IMR-90 (cell line): ENCODE measurements at regions of chr4 and their contacts with region 1.

Region 1: DNA sequence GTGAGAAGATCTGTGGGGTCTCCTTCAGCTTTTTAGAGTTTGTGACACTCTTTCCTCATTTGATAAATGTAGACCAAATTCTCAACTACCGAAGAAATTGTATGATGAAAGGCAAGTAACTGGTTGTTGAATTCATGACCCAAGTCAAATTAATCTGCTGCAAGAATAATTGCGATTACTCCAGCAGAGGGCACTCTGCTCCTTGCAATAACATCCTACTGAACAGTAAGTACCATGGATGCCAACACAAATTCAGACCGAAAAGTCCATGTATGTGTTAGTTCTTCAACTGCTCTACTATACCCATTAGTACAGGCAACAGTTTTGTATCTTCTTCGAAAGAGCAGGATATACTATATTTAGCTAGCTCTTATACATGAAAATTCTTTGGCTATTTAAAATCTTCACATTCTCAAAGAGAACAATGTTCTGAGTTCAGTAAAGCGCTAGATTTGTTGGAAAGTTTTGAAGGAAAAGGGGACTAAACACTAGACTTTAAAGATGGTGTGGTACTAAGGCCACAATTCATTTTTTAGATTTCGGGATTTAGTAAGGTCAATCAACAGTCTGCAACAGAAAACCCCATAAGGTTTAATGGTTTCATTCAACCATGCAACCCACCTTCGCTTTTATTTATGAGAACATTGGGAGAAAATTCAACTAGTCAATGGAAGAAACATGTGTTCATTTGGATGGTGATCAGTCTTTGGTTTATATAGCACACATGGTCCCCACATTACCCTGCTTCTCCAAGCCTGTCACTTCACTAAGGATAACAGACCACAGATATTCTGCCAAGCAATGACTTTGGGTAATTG is 105.4 kb upstream of the TBC1D9 start:
- DNase-seq: peak; percentile 91
- ATAC-seq: peak; percentile 79
- H3K4me3 ChIP-seq: no peak overlapping the region
- H3K27ac ChIP-seq: no peak overlapping the region
- H3K4me1 ChIP-seq: peaks cover 2% of the 10 kb centered on the region; the same call in 1 of the 2 replicates
- H3K27me3 ChIP-seq: no peaks in the 10 kb centered on the region
- CTCF ChIP-seq: peak; percentile 92
- POLR2A ChIP-seq: peak; percentile 44; the same call in 1 of the 2 replicates
- RAD21 ChIP-seq: peak; percentile 99

Region 2: GRCh38 chr4:140012688-140013486 is 848.7 kb before region 1 on chr4:
- CTCF ChIA-PET with region 1: no interaction called
- POLR2A ChIA-PET with region 1: no interaction called
- dilution Hi-C with region 1: no loop called
- in situ Hi-C with region 1: loop called (anchors 25 kb)
- intact Hi-C with region 1: no loop called
- DNase-seq: peak; percentile 95
- ATAC-seq: peak; percentile 98
- H3K4me3 ChIP-seq: no peak overlapping the region
- H3K27ac ChIP-seq: no peak overlapping the region
- H3K4me1 ChIP-seq: peaks cover 4% of the 10 kb centered on the region
- H3K27me3 ChIP-seq: no peaks in the 10 kb centered on the region
- CTCF ChIP-seq: peak; percentile 91
- POLR2A ChIP-seq: no peak
- RAD21 ChIP-seq: peak; percentile 95

Region 3: GRCh38 chr4:140884431-140885058 is 23.0 kb after region 1 on chr4:
- CTCF ChIA-PET with region 1: interaction called, 3 read pairs
- POLR2A ChIA-PET with region 1: no interaction called
- dilution Hi-C with region 1: no loop called
- in situ Hi-C with region 1: no loop called
- intact Hi-C with region 1: loop called (anchors 1 kb)
- DNase-seq: peak; percentile 80
- ATAC-seq: peak; percentile 95
- H3K4me3 ChIP-seq: no peak overlapping the region
- H3K27ac ChIP-seq: no peak overlapping the region
- H3K4me1 ChIP-seq: no peaks in the 10 kb centered on the region
- H3K27me3 ChIP-seq: no peaks in the 10 kb centered on the region
- CTCF ChIP-seq: peak; percentile 68
- POLR2A ChIP-seq: no peak
- RAD21 ChIP-seq: peak; percentile 72

Region 4: DNA sequence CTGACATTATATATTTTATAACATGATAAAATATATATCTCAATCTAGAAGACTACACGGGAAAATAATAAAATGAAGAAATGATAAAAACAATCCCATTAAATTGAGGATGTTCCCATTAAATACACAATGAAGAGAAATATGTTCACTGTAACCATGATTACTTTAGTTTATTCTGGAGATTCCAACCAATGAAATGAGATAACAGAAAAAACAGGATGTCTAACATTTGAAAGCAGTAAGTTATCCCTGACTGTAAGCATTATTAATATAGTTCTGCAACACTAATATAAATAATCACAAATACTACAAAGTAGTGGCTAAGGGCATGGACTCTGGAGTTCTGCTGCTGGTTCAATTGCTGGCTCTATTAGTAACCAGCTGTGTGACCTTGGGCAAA is 102.3 kb after region 1 on chr4:
- CTCF ChIA-PET with region 1: no interaction called
- POLR2A ChIA-PET with region 1: no interaction called
- dilution Hi-C with region 1: no loop called
- in situ Hi-C with region 1: no loop called
- intact Hi-C with region 1: loop called (anchors 5 kb)
- DNase-seq: no peak
- ATAC-seq: no peak
- H3K4me3 ChIP-seq: no peak overlapping the region
- H3K27ac ChIP-seq: no peak overlapping the region
- H3K4me1 ChIP-seq: no peaks in the 10 kb centered on the region
- H3K27me3 ChIP-seq: no peaks in the 10 kb centered on the region
- CTCF ChIP-seq: no peak
- POLR2A ChIP-seq: no peak
- RAD21 ChIP-seq: no peak

Region 5: GRCh38 chr4:140996766-140997165 is 135.2 kb after region 1 on chr4:
- CTCF ChIA-PET with region 1: no interaction called
- POLR2A ChIA-PET with region 1: no interaction called
- dilution Hi-C with region 1: no loop called
- in situ Hi-C with region 1: loop called (anchors 10 kb)
- intact Hi-C with region 1: loop called (anchors 2 kb)
- DNase-seq: peak; percentile 78
- ATAC-seq: peak; percentile 86
- H3K4me3 ChIP-seq: no peak overlapping the region
- H3K27ac ChIP-seq: no peak overlapping the region
- H3K4me1 ChIP-seq: peaks cover 2% of the 10 kb centered on the region; the same call in 1 of the 2 replicates
- H3K27me3 ChIP-seq: no peaks in the 10 kb centered on the region
- CTCF ChIP-seq: peak; percentile 48
- POLR2A ChIP-seq: no peak
- RAD21 ChIP-seq: peak; percentile 48

Region 6: GRCh38 chr4:141046255-141046654 is 184.7 kb after region 1 on chr4:
- CTCF ChIA-PET with region 1: no interaction called
- POLR2A ChIA-PET with region 1: no interaction called
- dilution Hi-C with region 1: no loop called
- in situ Hi-C with region 1: no loop called
- intact Hi-C with region 1: loop called (anchors 1 kb)
- DNase-seq: peak; percentile 100
- ATAC-seq: peak; percentile 97
- H3K4me3 ChIP-seq: no peak overlapping the region
- H3K27ac ChIP-seq: no peak overlapping the region
- H3K4me1 ChIP-seq: peaks cover 5% of the 10 kb centered on the region; the same call in 1 of the 2 replicates
- H3K27me3 ChIP-seq: no peaks in the 10 kb centered on the region
- CTCF ChIP-seq: no peak
- POLR2A ChIP-seq: no peak; the same call in 1 of the 2 replicates
- RAD21 ChIP-seq: peak; percentile 14; the same call in 1 of the 2 replicates